H1 (cell line): ENCODE measurements at regions of chr7 and their contacts with region 1.

Region 1: DNA sequence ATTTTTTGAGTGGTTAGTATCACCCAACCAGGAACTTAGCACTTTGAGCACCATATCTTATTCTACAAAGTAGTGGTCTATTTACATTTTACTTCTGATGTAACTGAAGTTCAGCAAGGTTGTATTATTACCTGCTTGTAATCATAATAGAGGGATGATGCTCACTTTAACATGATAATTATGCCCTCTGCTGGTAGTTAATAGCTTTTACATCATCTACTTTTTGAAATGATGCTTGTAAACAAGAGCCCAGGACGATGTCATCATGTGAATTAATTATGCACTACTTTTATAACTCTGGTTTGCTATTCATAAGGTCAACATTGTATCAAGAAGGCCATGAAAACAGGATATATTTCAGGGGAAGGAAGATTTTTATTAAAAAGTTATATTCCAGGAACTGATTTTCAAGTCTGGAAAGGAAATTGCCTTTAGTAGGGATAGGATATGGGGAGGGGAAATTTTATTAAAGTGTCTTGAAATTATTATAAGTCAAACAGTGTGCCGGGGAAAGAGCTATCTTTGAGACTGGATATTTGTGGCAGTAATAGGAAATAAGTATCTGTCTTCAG is 80.3 kb upstream of the SCIN start:
- DNase-seq: no peak
- H3K4me3 ChIP-seq: no peak overlapping the region
- H3K27ac ChIP-seq: no peak overlapping the region
- H3K4me1 ChIP-seq: peaks cover 0 to 4% (median 0%) of the 10 kb centered on the region in 4 experiments; a peak in 1 of 7 replicates
- H3K27me3 ChIP-seq: no peaks in the 10 kb centered on the region
- CTCF ChIP-seq: peak in 2 of 3 experiments; percentile 44 to 51; a peak in 2 of 4 replicates
- EP300 ChIP-seq: no peak; a peak in 1 of 3 replicates
- POLR2A ChIP-seq: no peak
- RAD21 ChIP-seq: peak; percentile 55 to 62

Region 2: DNA sequence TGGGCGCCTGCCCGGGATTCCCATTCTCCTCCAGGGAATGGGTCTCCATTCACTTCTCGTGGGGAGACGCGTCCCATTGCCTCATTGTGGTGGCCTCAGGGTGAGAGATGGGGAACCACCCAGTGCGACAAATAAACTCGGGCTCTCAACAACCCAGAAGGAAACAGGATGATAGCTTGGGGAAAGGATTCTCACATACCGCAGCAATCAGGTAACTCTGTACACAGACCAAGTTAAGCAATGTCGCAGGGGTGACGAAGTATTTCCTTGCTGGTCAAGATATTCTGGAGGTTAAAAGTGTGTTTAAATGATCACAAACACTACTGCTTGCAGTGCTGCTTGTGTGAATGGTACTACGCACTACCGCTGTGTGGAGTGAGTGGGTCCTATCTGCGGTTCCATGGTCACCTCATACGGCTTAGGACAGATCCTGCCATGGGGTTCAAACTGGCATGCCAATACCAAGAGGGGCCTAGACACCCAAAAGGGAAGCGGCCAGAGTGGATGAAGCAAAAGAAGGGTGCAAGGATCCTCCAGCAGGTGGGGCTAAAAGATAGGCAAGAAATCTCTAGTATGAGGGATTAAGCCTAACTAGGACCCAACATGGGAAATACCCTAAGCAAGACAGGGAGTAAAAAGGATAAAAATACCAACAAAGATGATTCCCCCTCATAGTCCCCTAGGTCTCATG is 422.9 kb before region 1 on chr7:
- CTCF ChIA-PET with region 1: interaction called, 13 read pairs
- POLR2A ChIA-PET with region 1: no interaction called
- DNase-seq: peak; percentile 56 to 83
- H3K4me3 ChIP-seq: no peak overlapping the region
- H3K27ac ChIP-seq: no peak overlapping the region
- H3K4me1 ChIP-seq: peaks cover 0 to 2% (median under 1%) of the 10 kb centered on the region in 4 experiments; a peak in 3 of 7 replicates
- H3K27me3 ChIP-seq: no peaks in the 10 kb centered on the region
- CTCF ChIP-seq: peak; percentile 45 to 81 (median 79)
- EP300 ChIP-seq: no peak
- POLR2A ChIP-seq: no peak
- RAD21 ChIP-seq: peak; percentile 98

Region 3: GRCh38 chr7:12389089-12389700 is 101.0 kb before region 1 on chr7:
- CTCF ChIA-PET with region 1: interaction called, 17 read pairs
- POLR2A ChIA-PET with region 1: no interaction called
- DNase-seq: peak in 1 of 2 experiments; percentile 5
- H3K4me3 ChIP-seq: no peak overlapping the region
- H3K27ac ChIP-seq: no peak overlapping the region
- H3K4me1 ChIP-seq: peaks cover 0 to 3% (median 1%) of the 10 kb centered on the region in 4 experiments; a peak in 3 of 7 replicates
- H3K27me3 ChIP-seq: peaks cover 0 to 1% (median 0%) of the 10 kb centered on the region in 4 experiments; a peak in 1 of 7 replicates
- CTCF ChIP-seq: peak; percentile 47 to 97 (median 83)
- EP300 ChIP-seq: no peak
- POLR2A ChIP-seq: no peak
- RAD21 ChIP-seq: peak; percentile 73 to 86

Region 4: DNA sequence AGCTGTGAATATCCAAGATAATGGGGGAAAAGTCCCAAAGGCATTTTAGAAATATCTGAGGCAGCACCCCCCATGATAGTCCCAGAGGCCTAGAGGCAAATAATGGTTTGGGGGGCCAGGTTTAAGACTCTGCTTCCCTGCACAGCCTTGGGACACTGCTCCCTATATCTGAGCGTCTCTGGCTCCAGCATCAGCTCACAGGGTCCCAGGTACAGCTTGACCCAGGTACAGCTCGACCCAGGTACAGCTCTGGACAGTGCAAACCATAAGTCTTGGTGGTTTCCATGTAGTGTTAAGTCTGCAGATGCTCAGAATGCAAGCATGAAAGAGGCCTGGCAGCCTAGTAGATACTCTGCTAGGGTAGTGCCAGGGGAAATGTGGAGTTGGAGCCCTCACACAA is 39.6 kb before region 1 on chr7:
- CTCF ChIA-PET with region 1: interaction called, 103 read pairs
- POLR2A ChIA-PET with region 1: no interaction called
- DNase-seq: no peak
- H3K4me3 ChIP-seq: no peak overlapping the region
- H3K27ac ChIP-seq: no peak overlapping the region
- H3K4me1 ChIP-seq: peaks cover 0 to 5% (median 3%) of the 10 kb centered on the region in 4 experiments; a peak in 3 of 7 replicates
- H3K27me3 ChIP-seq: no peaks in the 10 kb centered on the region
- CTCF ChIP-seq: no peak
- EP300 ChIP-seq: no peak
- POLR2A ChIP-seq: no peak
- RAD21 ChIP-seq: no peak

Region 5: GRCh38 chr7:12540850-12541249 is 50.6 kb after region 1 on chr7:
- CTCF ChIA-PET with region 1: no interaction called
- POLR2A ChIA-PET with region 1: no interaction called
- DNase-seq: no peak
- H3K4me3 ChIP-seq: no peak overlapping the region
- H3K27ac ChIP-seq: no peak overlapping the region
- H3K4me1 ChIP-seq: no peaks in the 10 kb centered on the region
- H3K27me3 ChIP-seq: no peaks in the 10 kb centered on the region
- CTCF ChIP-seq: no peak
- EP300 ChIP-seq: no peak
- POLR2A ChIP-seq: no peak
- RAD21 ChIP-seq: no peak